K562 (cell line): ENCODE measurements at regions of chr6 and their contacts with region 1.

Region 1: GRCh38 chr6:108914235-108915022 is 66.2 kb downstream of the ARMC2 start:
- DNase-seq: peak; percentile 72 to 80 (median 74)
- ATAC-seq: peak; percentile 93
- H3K4me3 ChIP-seq: no peak overlapping the region
- H3K27ac ChIP-seq: no peak overlapping the region
- H3K4me1 ChIP-seq: no peaks in the 10 kb centered on the region
- H3K27me3 ChIP-seq: peaks cover 14 to 21% of the 10 kb centered on the region in 2 experiments; a peak in 3 of 5 replicates
- CTCF ChIP-seq: peak; percentile 96 to 99 (median 98)
- EP300 ChIP-seq: no peak
- POLR2A ChIP-seq: no peak
- RAD21 ChIP-seq: peak; percentile 39 to 79; a peak in 3 of 4 replicates

Region 2: DNA sequence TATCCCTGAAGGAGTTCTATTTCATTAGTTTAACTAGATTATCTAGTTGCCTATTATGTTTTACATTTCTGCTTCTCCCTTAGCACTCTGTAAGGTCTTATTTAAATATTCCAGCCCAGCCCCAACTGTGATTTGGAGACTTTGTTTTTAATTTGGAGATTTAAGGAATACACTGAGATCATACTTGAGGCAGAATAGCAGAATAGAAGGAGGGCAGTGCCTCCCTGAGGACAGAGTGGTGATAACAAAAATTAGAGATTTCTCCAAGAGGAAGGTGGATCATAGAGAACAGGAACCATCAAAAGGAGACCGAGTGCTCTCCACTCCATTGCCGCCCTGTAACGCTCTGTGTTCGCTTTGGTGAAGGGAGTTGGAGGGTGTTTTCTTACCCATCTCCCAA is 482.6 kb after region 1 on chr6:
- CTCF ChIA-PET with region 1: no interaction called
- POLR2A ChIA-PET with region 1: no interaction called
- in situ Hi-C with region 1: no loop called
- intact Hi-C with region 1: loop called (anchors 10 kb)
- DNase-seq: peak in 3 of 4 experiments; percentile 27 to 48 (median 31)
- ATAC-seq: peak; percentile 86
- H3K4me3 ChIP-seq: no peak overlapping the region
- H3K27ac ChIP-seq: no peak overlapping the region
- H3K4me1 ChIP-seq: peaks cover 0 to 3% of the 10 kb centered on the region in 2 experiments; a peak in 4 of 5 replicates
- H3K27me3 ChIP-seq: no peaks in the 10 kb centered on the region; a peak in 1 of 5 replicates
- CTCF ChIP-seq: peak; percentile 32 to 72 (median 50); a peak in 4 of 6 replicates
- EP300 ChIP-seq: no peak
- POLR2A ChIP-seq: no peak
- RAD21 ChIP-seq: peak; percentile 79 to 84